Activated T-helper 2 cell treated with anti-CD3 and anti-CD28 coated beads, Interferon-gamma antibody, Interleukin-2, Interleukin-4, amounts not matched to agents 10 μg/mL and 5 μg/mL and 100 μg/mL, durations not matched to agents 14 hours and 24 hours and 36 hours (primary cell): ENCODE measurements at regions of chr2 and their contacts with region 1.

Region 1: DNA sequence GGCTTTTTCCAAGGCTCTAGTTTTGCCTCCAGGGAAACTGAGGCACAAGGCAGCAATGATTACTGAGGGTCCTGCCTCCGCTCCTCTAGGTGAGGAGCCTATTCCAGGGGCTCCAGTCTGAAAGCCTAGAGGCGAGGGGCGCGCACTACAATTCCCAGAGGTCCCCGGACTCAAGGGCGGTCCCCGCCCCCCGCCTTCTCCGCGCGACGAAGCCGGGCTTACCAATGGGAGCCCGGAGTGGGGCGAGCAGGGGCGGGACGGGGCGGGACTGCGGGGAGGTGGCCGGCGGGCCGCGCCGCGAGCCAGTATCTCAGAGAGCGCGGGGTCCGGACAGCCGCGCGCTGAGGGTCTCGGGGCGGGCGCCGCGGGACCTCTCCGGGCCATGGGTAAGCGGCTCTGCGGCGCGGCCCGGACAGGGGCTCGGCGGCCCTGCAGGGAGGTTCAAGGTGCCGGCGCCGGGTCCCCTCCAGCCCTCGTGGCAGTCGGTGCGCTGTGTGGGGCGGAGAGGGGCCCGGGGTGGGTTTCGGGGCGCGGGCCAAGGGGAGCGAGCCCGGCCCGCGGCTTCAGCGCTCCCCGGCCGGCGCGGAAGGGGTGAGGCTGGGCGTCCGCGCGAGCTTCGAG is at the start of gene ARID5A:
- DNase-seq: peak; percentile 86
- H3K4me3 Mint-ChIP-seq: peak within 1 kb of the TSS; percentile 94
- H3K27ac Mint-ChIP-seq: peak within 1 kb of the TSS; percentile 91
- H3K4me1 Mint-ChIP-seq: peaks cover 66% of the 10 kb centered on the region
- H3K27me3 Mint-ChIP-seq: no peaks in the 10 kb centered on the region
- total RNA-seq, gene ARID5A: 164 and 170 TPM in 2 replicates

Region 2: DNA sequence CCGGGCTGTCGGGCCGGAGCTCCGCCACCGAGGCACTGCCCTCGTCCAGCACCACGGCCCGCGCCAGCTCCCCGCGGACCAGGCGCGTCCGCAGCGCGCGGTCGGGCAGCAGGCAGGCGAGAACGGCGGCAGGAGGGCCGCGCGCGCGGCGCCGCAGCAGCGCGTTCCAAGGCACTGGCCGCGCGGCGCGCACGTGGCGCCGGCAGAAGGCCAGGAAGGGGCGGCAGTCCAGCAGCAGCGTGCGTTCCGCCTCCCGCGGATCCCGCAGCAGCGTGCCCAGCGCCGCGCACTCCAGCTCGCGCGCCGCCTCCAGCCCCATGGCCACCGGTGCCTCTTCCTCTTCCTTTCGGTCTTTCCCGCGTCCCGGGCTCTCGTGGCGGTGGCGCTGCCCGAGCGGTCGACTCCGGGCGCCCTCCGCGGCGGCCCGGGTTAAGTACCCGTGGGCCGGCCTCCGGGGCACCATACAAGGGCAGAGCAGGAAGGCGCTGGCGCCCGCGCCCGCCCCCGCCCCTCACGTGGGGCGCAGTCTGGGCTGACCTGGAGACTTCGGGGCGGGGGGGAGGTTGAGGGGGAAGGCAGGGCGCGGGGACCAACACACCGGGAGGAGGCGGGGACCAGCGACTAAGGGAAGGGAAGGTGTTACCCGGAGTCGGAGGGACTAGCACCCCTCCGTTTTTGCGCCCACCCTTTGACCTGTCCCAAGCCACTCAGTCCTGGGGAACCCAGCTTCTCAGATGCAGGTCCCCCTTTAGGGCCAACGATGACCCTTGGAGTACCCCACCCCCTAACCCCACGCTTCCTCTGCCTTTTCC is 391.3 kb before region 1 on chr2 and contains the start of gene DUSP2:
- intact Hi-C with region 1: loop called (anchors 5 kb)
- DNase-seq: peak; percentile 83
- H3K4me3 Mint-ChIP-seq: peak within 1 kb of the TSS; percentile 95
- H3K27ac Mint-ChIP-seq: peak within 1 kb of the TSS; percentile 97
- H3K4me1 Mint-ChIP-seq: peaks cover 49% of the 10 kb centered on the region
- H3K27me3 Mint-ChIP-seq: no peaks in the 10 kb centered on the region
- total RNA-seq, gene DUSP2: 238 and 260 TPM in 2 replicates

Region 3: GRCh38 chr2:96320728-96321622 is 215.6 kb before region 1 on chr2:
- intact Hi-C with region 1: loop called (anchors 5 kb)
- DNase-seq: no peak
- H3K4me3 Mint-ChIP-seq: peak overlapping the region; percentile 88
- H3K27ac Mint-ChIP-seq: peak overlapping the region; percentile 86
- H3K4me1 Mint-ChIP-seq: peaks cover 54% of the 10 kb centered on the region
- H3K27me3 Mint-ChIP-seq: no peaks in the 10 kb centered on the region

Region 4: GRCh38 chr2:96485751-96486651 is 50.6 kb before region 1 on chr2:
- intact Hi-C with region 1: loop called (anchors 2 kb)
- DNase-seq: peak; percentile 87
- H3K4me3 Mint-ChIP-seq: peak overlapping the region; percentile 90
- H3K27ac Mint-ChIP-seq: peak overlapping the region; percentile 98
- H3K4me1 Mint-ChIP-seq: peaks cover 47% of the 10 kb centered on the region
- H3K27me3 Mint-ChIP-seq: no peaks in the 10 kb centered on the region

Region 5: GRCh38 chr2:96602330-96602823 is 65.8 kb after region 1 on chr2:
- intact Hi-C with region 1: loop called (anchors 5 kb)
- DNase-seq: no peak
- H3K4me3 Mint-ChIP-seq: no peak overlapping the region
- H3K27ac Mint-ChIP-seq: no peak overlapping the region
- H3K4me1 Mint-ChIP-seq: peaks cover 30% of the 10 kb centered on the region
- H3K27me3 Mint-ChIP-seq: no peaks in the 10 kb centered on the region

Region 6: DNA sequence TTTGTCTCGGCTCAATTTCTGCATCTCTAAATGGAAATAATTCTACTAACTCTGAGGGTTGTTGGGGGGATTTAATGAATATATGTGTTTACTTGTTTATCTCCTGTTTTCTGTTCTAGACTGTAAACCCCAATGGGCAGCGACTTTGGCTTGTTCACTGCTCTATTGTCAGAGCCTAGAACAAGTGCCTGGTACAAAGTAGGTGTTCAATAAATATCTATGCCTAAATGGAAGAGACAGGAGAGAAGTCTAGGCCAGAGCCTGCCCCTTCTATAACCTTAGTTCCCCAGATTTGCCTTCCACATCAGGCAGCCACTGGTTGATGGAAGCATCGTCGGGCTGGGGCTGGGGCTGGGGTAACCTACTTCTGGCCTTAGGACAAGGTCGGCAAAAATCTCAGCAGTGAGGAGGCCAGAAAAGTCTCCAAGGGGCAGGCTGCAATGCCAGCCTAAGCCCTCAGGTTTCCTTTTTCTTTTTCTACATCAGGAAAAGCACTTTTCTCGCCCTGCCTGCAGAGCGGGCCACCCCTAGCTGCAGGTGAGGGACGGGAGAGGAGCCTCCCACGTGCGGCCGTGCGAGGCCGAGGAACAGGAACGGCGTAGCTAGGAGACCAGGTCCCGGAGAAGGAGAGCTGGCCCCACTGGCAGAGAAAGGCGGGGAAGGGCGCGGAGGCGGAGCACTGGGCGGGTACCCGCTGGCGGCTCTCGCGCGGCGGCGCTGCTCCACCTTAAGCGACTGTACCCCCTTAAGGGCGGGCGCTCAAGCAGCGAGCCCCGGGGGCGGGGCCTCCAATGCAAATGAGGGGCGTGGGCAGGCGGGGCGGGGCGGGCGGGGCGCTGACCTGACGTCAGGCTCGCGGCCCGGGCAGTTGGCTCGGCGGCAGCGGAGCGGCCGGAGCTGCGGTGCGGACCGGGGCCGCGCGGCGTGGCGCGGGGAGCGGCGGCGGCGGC is 223.8 kb after region 1 on chr2 and contains the start of gene CNNM4:
- intact Hi-C with region 1: loop called (anchors 10 kb)
- DNase-seq: peak; percentile 88
- H3K4me3 Mint-ChIP-seq: peak within 1 kb of the TSS; percentile 80
- H3K27ac Mint-ChIP-seq: peak within 1 kb of the TSS; percentile 79
- H3K4me1 Mint-ChIP-seq: peaks cover 44% of the 10 kb centered on the region
- H3K27me3 Mint-ChIP-seq: no peaks in the 10 kb centered on the region
- total RNA-seq, gene CNNM4: 10.1 and 11.3 TPM in 2 replicates